Endothelial cell of umbilical vein (primary cell): ENCODE measurements at regions of chr4 and their contacts with region 1.

Region 1: GRCh38 chr4:142095886-142096605 is 459.7 kb downstream of the IL15 start:
- DNase-seq: peak; percentile 94
- H3K4me3 ChIP-seq: no peak overlapping the region
- H3K27ac ChIP-seq: peak overlapping the region; percentile 68
- H3K4me1 ChIP-seq: peaks cover 28% of the 10 kb centered on the region
- H3K27me3 ChIP-seq: no peaks in the 10 kb centered on the region
- CTCF ChIP-seq: no peak
- POLR2A ChIP-seq: no peak

Region 2: DNA sequence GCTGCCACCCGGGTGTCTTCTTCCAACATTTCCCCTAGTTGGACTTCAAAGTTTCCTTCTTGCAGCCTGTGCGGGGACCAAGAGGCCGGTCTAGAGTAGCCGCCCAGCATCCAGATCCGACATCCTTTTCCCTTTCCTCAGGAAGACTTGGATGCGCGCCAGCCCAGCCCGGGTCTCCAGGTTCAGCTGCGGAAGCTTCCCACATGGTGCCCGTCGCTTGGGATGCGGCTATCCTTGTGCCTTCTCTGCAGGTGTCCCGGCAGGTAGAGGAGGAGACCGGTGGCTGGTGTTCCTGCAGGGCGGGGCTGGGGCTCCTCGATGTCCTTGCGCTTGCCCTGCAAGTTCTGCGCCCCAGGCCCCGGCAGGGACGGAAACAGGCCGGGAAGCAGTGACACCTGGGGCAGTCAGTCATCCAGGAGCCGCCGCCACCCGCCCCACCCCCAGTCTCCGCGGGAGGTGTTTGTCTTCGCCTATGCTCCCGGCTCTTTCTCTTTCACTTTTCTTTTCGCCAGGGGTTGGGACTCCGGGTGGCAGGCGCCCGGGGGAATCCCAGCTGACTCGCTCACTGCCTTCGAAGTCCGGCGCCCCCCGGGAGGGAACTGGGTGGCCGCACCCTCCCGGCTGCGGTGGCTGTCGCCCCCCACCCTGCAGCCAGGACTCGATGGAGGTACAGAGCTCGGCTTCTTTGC is 459.8 kb before region 1 on chr4 and contains the start of gene IL15:
- CTCF ChIA-PET with region 1: no interaction called
- POLR2A ChIA-PET with region 1: no interaction called
- dilution Hi-C with region 1: no loop called
- intact Hi-C with region 1: loop called (anchors 10 kb)
- DNase-seq: peak; percentile 74
- H3K4me3 ChIP-seq: peak within 1 kb of the TSS; percentile 79 to 90 (median 86)
- H3K27ac ChIP-seq: peak within 1 kb of the TSS; percentile 25
- H3K4me1 ChIP-seq: peaks cover 8% of the 10 kb centered on the region
- H3K27me3 ChIP-seq: no peaks in the 10 kb centered on the region
- CTCF ChIP-seq: no peak
- POLR2A ChIP-seq: no peak
- total RNA-seq, gene IL15: 3.0 and 3.1 TPM in 2 replicates

Region 3: GRCh38 chr4:141746026-141746425 is 350.0 kb before region 1 on chr4:
- CTCF ChIA-PET with region 1: no interaction called
- POLR2A ChIA-PET with region 1: no interaction called
- dilution Hi-C with region 1: no loop called
- intact Hi-C with region 1: loop called (anchors 2 kb)
- DNase-seq: peak; percentile 78
- H3K4me3 ChIP-seq: no peak overlapping the region
- H3K27ac ChIP-seq: peak overlapping the region; percentile 20
- H3K4me1 ChIP-seq: peaks cover 9% of the 10 kb centered on the region
- H3K27me3 ChIP-seq: no peaks in the 10 kb centered on the region
- CTCF ChIP-seq: no peak
- POLR2A ChIP-seq: no peak

Region 4: GRCh38 chr4:141912831-141913230 is 183.2 kb before region 1 on chr4:
- CTCF ChIA-PET with region 1: no interaction called
- POLR2A ChIA-PET with region 1: no interaction called
- dilution Hi-C with region 1: no loop called
- intact Hi-C with region 1: loop called (anchors 5 kb)
- DNase-seq: peak; percentile 97
- H3K4me3 ChIP-seq: no peak overlapping the region
- H3K27ac ChIP-seq: peak overlapping the region; percentile 44
- H3K4me1 ChIP-seq: peaks cover 11% of the 10 kb centered on the region
- H3K27me3 ChIP-seq: no peaks in the 10 kb centered on the region
- CTCF ChIP-seq: no peak
- POLR2A ChIP-seq: no peak